ENCODE measurements at regions of chr5 and their contacts with region 1.

Region 1: DNA sequence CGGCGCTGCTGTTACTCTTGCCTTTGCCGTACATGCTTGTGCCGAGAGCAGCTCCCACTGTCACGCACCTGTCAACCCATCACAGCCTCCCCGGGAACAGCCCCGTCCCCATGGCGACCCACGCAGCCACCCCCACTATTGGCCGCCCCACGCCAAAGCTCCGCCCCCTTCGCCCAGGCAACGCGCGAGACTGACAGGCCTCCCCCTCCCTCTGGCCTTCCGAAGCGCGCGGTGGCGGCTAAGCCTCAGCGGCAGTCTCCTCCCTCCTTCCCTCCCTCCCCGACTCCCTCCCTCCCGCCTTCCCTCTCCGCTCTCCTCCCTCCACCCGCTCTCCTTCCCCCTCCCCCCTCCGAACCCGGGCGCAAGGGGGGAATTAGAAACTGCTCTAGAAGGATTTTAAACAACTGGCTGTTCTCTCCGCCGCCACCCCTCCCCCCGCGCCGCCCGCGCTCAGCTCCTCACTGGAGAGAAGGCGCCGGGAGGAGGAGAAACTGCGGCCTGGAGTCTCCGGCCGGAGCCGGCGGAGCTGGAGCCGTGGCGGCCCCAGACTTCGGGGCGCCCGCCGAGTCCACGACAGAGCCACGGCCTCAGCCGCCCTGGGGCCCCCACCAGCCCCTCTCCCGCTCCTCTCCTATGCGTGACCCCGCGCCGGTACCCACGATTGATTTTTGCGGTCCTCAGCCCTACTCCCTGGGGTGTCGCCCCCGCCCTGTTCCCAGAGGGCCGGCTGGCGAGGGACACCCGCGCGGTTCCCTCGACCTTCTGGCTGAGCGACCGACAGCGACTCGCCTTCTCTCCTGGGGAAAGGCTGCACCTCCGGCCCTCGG is at the start of gene SSBP2:
- DNase-seq: peak; percentile 99 to 100 (median 100)

Region 2: GRCh38 chr5:81425569-81425968 is 325.7 kb before region 1 on chr5:
- intact Hi-C with region 1: loop called (anchors 5 kb)
- DNase-seq: no peak

Region 3: DNA sequence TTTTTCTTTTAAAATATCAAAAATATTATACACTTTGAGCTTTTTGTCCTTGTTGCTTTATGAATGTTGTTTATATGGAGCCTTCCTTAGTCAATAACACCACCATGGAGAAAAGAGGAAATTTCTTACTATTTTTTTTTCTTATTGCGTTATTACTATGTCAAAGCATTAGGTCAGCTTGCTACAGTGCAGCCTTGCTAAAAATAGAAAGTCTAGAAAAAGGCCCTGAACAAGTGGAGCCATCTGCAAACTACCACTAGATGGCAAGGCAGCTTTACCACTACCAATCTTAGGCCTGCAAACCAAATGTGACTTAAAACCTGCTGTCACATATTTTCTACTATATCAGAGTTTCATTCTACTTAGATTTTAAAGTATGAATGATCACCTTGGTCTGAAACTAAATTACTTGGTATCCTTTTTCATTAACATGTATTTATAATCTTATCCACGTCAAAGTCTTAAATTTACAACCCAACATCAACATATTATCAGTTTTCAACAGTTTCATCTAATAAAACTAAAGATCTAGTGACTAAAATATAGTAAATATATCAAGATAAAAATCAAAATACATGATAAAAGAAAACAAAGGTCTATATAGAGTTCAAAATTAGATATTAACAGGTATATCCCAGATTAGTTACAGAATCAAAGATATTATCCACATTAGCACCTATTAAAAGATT is 244.2 kb before region 1 on chr5:
- intact Hi-C with region 1: loop called (anchors 1 kb)
- DNase-seq: peak in 4 of 10 donors; percentile 34 to 50 (median 42)

Region 4: DNA sequence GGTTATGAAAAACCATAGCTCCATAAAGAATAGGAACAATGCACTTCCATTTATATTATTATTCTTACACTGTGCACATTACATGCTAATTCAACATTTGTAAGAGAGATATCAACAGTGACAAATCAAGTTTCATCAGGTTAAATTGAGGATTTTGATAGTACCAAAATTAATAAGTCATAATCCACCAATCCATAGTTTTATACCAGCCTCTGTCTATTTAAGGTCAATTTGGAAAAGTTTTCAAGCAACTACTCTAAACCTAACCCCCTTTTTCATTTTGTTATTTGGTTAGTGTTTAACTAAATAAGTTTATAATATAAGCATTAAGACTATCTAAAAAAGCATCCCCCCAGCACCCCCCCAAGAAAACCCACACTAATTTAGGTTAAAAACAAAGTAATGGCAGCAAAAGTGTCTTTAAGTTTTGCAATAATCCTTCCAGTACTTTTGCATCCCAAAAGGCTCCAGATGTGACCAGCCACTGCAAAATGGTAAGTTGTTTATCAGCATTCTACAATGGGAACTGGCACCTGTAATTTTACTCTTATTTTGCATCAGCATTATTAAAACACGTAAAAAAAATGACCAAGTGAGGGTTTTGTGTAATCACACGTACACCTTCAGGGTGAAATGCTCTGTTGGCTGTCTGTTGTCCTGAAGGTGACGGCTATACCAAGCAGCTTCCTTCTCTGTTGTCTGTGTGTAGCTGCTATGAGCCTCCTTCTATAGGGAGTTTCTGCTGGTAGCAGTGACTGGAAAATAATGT is 36.4 kb after region 1 on chr5:
- intact Hi-C with region 1: loop called (anchors 5 kb)
- DNase-seq: peak in 3 of 10 donors; percentile 24 to 34 (median 27)

Region 5: DNA sequence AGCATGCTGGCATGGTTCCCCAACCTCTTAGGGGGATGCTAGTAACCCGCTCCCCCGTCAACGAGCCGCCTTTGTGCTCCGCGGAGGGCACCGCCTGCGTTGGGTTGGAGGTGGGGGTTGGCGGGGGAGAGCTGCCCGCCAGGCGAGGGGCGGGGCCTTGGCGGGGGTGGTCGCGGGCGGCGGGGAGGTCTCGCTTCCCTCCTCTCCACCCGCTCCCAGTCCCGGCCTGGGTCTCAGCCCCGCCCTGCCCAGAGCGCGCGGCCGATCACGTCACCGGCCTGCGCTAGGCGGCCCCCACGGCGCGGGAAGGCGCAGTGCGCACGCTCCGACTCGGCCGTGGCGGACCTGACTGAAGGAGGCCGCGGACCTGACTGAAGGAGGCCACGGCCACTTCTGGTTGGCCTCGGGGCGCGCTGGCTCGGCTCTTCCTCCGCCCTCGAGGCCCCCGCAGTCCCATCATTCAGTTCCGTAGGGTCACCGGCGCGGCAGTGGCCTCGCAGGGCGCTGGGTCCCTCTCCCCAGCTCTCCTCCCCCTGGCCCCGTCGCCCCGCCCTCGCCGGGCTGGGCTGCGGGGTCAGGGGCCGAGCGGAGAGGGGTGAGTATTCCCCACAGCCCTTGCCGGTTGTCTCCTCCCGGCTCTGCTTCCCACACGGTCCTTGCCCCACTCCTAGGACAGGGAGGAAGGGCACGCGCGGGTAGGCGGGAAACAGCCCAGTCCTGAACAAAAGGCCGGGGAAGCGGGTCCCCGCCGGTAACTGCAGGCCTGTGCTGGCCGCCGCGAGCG is 220.7 kb after region 1 on chr5 and contains the start of gene ATG10:
- intact Hi-C with region 1: loop called (anchors 1 kb)
- DNase-seq: peak; percentile 86 to 99 (median 92)

Measured in posterior cingulate gyrus (tissue), 11 donors.